Transverse colon (tissue), 4 donors: ENCODE measurements at regions of chr9 and their contacts with region 1.

Region 1: DNA sequence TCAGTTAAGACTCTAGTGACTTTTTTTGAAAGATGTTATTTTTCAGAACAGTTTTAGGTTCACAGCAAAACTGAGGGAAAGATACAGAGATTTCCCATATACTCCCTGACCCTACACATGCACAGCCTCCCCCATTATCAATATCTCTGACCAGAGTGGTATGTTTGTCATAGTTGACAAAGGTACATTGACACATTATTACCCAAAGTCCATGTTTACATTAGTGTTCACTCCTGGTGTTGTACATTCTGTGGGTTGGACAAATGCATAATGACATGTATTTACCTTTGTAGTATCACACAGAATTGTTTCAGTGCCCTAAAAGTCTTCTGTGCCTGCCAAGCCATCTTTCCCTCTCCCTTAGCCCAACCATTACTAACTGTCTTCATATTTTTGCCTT is 470.7 kb upstream of the DMAC1 start:
- DNase-seq: no peak
- H3K4me3 ChIP-seq: no peak overlapping the region
- H3K27ac ChIP-seq: no peak overlapping the region
- H3K4me1 ChIP-seq: no peaks in the 10 kb centered on the region
- H3K27me3 ChIP-seq: no peaks in the 10 kb centered on the region
- CTCF ChIP-seq: no peak
- EP300 ChIP-seq: no peak
- POLR2A ChIP-seq: no peak

Region 2: GRCh38 chr9:8301296-8301695 is 31.1 kb after region 1 on chr9:
- in situ Hi-C with region 1: no loop called
- intact Hi-C with region 1: loop called (anchors 2 kb)
- DNase-seq: no peak
- H3K4me3 ChIP-seq: no peak overlapping the region
- H3K27ac ChIP-seq: no peak overlapping the region
- H3K4me1 ChIP-seq: no peaks in the 10 kb centered on the region
- H3K27me3 ChIP-seq: no peaks in the 10 kb centered on the region
- CTCF ChIP-seq: no peak
- EP300 ChIP-seq: no peak
- POLR2A ChIP-seq: no peak

Region 3: GRCh38 chr9:8329561-8330283 is 59.5 kb after region 1 on chr9:
- in situ Hi-C with region 1: no loop called
- intact Hi-C with region 1: no loop called
- DNase-seq: peak; percentile 23
- H3K4me3 ChIP-seq: no peak overlapping the region
- H3K27ac ChIP-seq: peak overlapping the region in 2 of 4 donors; percentile 8 to 60
- H3K4me1 ChIP-seq: no peaks in the 10 kb centered on the region
- H3K27me3 ChIP-seq: no peaks in the 10 kb centered on the region
- CTCF ChIP-seq: no peak
- EP300 ChIP-seq: no peak
- POLR2A ChIP-seq: no peak